ENCODE measurements at regions of chr6 and their contacts with region 1.

Region 1: GRCh38 chr6:31575335-31575901 is at the start of gene TNF:
- DNase-seq: peak; percentile 66
- ATAC-seq: peak; percentile 51
- H3K4me3 Mint-ChIP-seq: peak within 1 kb of the TSS; percentile 98
- H3K27ac Mint-ChIP-seq: peak within 1 kb of the TSS; percentile 99
- H3K4me1 Mint-ChIP-seq: peaks cover 95% of the 10 kb centered on the region
- H3K27me3 Mint-ChIP-seq: no peaks in the 10 kb centered on the region
- CTCF ChIP-seq: no peak
- total RNA-seq, gene TNF: 135 and 139 TPM in 2 replicates

Region 2: DNA sequence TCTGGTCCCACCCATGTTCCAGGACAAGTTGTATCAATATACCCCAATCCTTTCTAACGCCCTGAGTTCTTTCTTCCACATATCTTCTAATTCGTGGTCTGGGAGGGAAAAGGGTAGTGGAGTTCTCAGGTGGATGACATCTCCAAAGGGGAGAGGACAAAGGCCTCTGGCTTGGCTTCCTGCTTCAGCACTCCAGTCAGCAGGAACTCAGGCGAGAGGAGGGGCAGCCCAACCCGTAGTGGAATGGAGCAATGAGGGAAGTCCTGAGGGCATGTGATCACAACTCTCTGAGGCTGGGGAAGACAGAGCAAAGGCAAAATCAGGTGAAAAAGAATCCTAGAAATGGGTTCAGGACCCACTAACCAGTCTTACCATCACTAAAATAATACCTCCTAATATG is 875.1 kb before region 1 on chr6:
- CTCF ChIA-PET with region 1: no interaction called
- POLR2A ChIA-PET with region 1: interaction called, 15 read pairs
- intact Hi-C with region 1: no loop called
- DNase-seq: no peak
- ATAC-seq: no peak
- H3K4me3 Mint-ChIP-seq: no peak overlapping the region
- H3K27ac Mint-ChIP-seq: no peak overlapping the region
- H3K4me1 Mint-ChIP-seq: no peaks in the 10 kb centered on the region
- H3K27me3 Mint-ChIP-seq: no peaks in the 10 kb centered on the region
- CTCF ChIP-seq: no peak

Region 3: DNA sequence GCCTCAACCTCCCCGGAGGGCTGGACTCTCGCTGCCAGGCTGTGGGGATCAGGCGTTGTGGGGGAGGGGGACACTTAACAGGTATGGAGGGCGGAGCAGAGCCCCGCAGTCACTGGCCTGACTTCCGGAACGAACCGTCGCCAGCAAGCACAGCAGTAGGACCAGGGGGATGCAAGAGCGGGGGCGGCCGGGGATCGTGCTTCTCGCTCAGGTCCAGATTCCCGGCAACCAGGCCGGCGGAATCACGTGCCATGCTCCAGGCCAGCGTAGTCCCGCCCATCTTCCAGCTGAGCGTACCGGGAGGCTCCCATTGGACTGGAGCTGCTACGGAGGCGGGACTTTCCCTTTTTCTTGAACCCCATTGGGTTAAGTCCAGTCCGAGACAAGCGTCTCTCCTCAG is 394.9 kb before region 1 on chr6:
- CTCF ChIA-PET with region 1: no interaction called
- POLR2A ChIA-PET with region 1: no interaction called
- intact Hi-C with region 1: no loop called
- DNase-seq: no peak
- ATAC-seq: peak; percentile 98
- H3K4me3 Mint-ChIP-seq: peak overlapping the region; percentile 85
- H3K27ac Mint-ChIP-seq: peak overlapping the region; percentile 65
- H3K4me1 Mint-ChIP-seq: peaks cover 12% of the 10 kb centered on the region
- H3K27me3 Mint-ChIP-seq: no peaks in the 10 kb centered on the region
- CTCF ChIP-seq: no peak

Region 4: GRCh38 chr6:31559958-31560696 is 15.3 kb before region 1 on chr6:
- CTCF ChIA-PET with region 1: interaction called, 611 read pairs
- POLR2A ChIA-PET with region 1: interaction called, 1,155 read pairs
- intact Hi-C with region 1: loop called (anchors 1 kb)
- DNase-seq: peak; percentile 52
- ATAC-seq: peak; percentile 67
- H3K4me3 Mint-ChIP-seq: peak overlapping the region; percentile 83
- H3K27ac Mint-ChIP-seq: peak overlapping the region; percentile 94
- H3K4me1 Mint-ChIP-seq: peaks cover 90% of the 10 kb centered on the region
- H3K27me3 Mint-ChIP-seq: no peaks in the 10 kb centered on the region
- CTCF ChIP-seq: no peak

Region 5: GRCh38 chr6:31586599-31587281 is 11.3 kb after region 1 on chr6:
- CTCF ChIA-PET with region 1: interaction called, 577 read pairs
- POLR2A ChIA-PET with region 1: interaction called, 1,155 read pairs
- intact Hi-C with region 1: loop called (anchors 1 kb)
- DNase-seq: peak; percentile 38
- ATAC-seq: peak; percentile 62
- H3K4me3 Mint-ChIP-seq: peak overlapping the region; percentile 72
- H3K27ac Mint-ChIP-seq: peak overlapping the region; percentile 94
- H3K4me1 Mint-ChIP-seq: peaks cover 91% of the 10 kb centered on the region
- H3K27me3 Mint-ChIP-seq: no peaks in the 10 kb centered on the region
- CTCF ChIP-seq: no peak

Region 6: GRCh38 chr6:31908791-31909190 is 333.4 kb after region 1 on chr6:
- CTCF ChIA-PET with region 1: no interaction called
- POLR2A ChIA-PET with region 1: no interaction called
- intact Hi-C with region 1: no loop called
- DNase-seq: no peak
- ATAC-seq: peak; percentile 49
- H3K4me3 Mint-ChIP-seq: no peak overlapping the region
- H3K27ac Mint-ChIP-seq: no peak overlapping the region
- H3K4me1 Mint-ChIP-seq: peaks cover 8% of the 10 kb centered on the region
- H3K27me3 Mint-ChIP-seq: peaks cover 4% of the 10 kb centered on the region
- CTCF ChIP-seq: no peak